GM10248 (cell line): ENCODE measurements at regions of chr3 and their contacts with region 1.

Region 1: GRCh38 chr3:129399145-129399894 is 29.1 kb downstream of the EFCAB12 start:
- DNase-seq: peak; percentile 84
- CTCF ChIP-seq: peak; percentile 78

Region 2: GRCh38 chr3:129413687-129414506 is 14.6 kb after region 1 on chr3:
- CTCF ChIA-PET with region 1: interaction called, 21 read pairs
- POLR2A ChIA-PET with region 1: interaction called, 3 read pairs
- DNase-seq: peak; percentile 63
- CTCF ChIP-seq: no peak

Region 3: DNA sequence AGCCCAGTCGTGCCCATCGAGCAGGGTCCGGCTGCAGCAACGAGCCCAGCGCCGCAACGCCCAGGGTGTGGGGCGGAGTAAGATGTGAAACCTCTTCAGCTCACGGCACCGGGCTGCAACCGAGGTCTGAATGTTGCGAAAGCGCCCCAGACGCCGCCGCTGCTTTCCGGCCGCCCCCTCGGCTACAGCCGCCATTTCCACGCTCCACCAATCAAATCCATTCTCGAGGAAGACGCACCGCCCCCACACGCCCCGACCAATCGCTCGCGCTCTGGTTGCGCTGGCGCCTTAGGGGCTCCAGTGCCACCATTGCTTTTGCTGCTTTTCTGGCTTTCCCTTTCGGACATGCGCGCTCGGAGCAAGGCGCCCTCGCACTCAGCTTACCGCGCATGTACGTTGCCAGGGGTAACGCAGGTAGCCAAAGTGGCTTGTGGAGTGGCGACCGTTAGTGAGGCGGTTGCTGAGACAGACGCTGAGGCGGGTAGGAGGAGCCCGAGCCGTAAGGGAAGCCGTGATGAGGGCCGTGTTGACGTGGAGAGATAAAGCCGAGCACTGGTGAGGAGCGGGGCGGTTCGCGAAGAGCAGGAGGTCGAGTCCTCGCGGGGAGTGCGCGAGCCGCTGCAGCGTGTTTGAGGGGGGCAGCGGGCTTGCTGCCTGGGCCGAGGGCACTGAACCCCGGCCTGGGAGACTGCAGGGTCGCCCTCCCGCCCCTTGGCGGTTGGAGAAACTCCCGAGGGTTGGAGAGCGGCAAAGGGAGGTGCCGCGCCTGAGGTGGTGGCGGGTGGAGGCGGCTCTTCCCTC is 40.7 kb after region 1 on chr3 and contains the starts of genes IFT122 and MBD4:
- CTCF ChIA-PET with region 1: interaction called, 14 read pairs
- POLR2A ChIA-PET with region 1: interaction called, 10 read pairs
- DNase-seq: peak; percentile 98
- CTCF ChIP-seq: no peak

Region 4: DNA sequence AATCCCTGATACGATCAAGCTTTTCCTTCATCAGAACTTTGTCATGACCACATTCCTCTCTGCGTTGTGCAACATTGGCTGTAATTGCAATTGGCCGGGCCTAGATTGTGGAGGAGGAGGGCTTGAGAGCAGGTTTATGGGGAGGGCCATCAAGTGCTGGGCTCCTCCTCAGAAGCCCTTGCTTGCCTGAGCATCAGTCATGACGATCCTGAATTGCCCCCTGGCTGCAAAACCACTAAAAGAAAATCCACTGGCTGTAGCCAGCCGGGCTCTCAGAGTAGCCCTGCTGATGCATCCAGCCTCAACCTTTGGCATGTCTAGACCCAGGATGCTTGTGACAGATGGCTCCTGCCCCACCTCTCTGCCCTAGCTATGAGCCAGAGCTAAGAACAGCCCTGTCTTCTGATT is 561.8 kb after region 1 on chr3:
- CTCF ChIA-PET with region 1: no interaction called
- POLR2A ChIA-PET with region 1: no interaction called
- DNase-seq: no peak
- CTCF ChIP-seq: no peak